ENCODE measurements at regions of chr2 and their contacts with region 1.

Region 1: GRCh38 chr2:127039387-127040031 is 67.4 kb downstream of the BIN1 start:
- DNase-seq: no peak
- H3K4me3 Mint-ChIP-seq: no peak overlapping the region
- H3K27ac Mint-ChIP-seq: no peak overlapping the region
- H3K4me1 Mint-ChIP-seq: peaks cover 7% of the 10 kb centered on the region
- H3K27me3 Mint-ChIP-seq: no peaks in the 10 kb centered on the region
- CTCF ChIP-seq: no peak

Region 2: DNA sequence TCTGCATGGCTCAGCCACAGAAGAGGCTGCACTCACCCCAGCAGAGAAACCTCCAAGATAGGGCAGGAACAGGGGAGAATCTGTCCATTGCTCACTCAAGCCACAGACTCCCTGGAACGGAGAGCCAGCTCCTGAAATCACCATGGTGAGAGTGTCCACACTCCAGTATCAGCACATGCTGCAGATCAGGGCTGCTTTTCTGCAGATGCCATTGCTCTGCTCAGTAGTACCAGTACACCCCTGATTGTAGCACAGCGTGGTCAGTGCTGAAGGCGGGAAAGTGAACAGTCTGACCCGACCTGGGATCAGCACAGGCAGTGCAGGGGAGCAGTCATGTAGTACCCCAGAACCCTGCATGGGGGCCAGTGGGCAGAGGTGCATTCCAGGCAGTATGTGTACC is 309.6 kb before region 1 on chr2:
- CTCF ChIA-PET with region 1: no interaction called
- POLR2A ChIA-PET with region 1: no interaction called
- intact Hi-C with region 1: no loop called
- DNase-seq: no peak
- H3K4me3 Mint-ChIP-seq: no peak overlapping the region
- H3K27ac Mint-ChIP-seq: no peak overlapping the region
- H3K4me1 Mint-ChIP-seq: no peaks in the 10 kb centered on the region
- H3K27me3 Mint-ChIP-seq: peaks cover 28% of the 10 kb centered on the region
- CTCF ChIP-seq: no peak

Region 3: GRCh38 chr2:127049927-127050802 is 10.7 kb after region 1 on chr2:
- CTCF ChIA-PET with region 1: interaction called, 21 read pairs
- POLR2A ChIA-PET with region 1: no interaction called
- intact Hi-C with region 1: no loop called
- DNase-seq: peak; percentile 53
- H3K4me3 Mint-ChIP-seq: no peak overlapping the region
- H3K27ac Mint-ChIP-seq: no peak overlapping the region
- H3K4me1 Mint-ChIP-seq: no peaks in the 10 kb centered on the region
- H3K27me3 Mint-ChIP-seq: no peaks in the 10 kb centered on the region
- CTCF ChIP-seq: peak; percentile 98

Measured in MCF 10A (cell line).